A673 (cell line): ENCODE measurements at regions of chr17 and their contacts with region 1.

Region 1: GRCh38 chr17:34637548-34638525 is 58.5 kb downstream of the TMEM132E start:
- DNase-seq: peak; percentile 66
- H3K4me3 ChIP-seq: no peak overlapping the region
- H3K27ac ChIP-seq: no peak overlapping the region
- H3K4me1 ChIP-seq: no peaks in the 10 kb centered on the region
- H3K27me3 ChIP-seq: no peaks in the 10 kb centered on the region
- CTCF ChIP-seq: peak; percentile 72

Region 2: DNA sequence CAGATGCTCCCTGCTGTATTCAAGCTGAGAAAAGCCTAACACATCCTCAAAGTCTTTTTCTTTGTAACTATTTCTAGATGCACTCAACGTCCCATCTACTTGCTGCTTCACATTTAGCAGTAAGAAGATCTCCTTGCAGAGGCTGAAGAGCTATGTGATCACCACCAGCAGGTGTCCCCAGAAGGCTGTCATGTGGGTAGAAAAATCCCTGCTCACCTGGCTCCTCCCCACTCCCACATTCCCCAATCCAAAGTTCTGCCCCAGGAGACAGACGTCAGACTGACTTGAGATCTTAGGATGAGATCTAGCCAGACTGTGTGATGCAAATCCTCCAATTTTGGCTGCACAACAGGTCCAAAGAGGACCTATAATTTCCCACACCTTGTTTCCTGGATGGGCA is 280.4 kb before region 1 on chr17:
- CTCF ChIA-PET with region 1: no interaction called
- POLR2A ChIA-PET with region 1: no interaction called
- intact Hi-C with region 1: no loop called
- DNase-seq: no peak
- H3K4me3 ChIP-seq: no peak overlapping the region
- H3K27ac ChIP-seq: no peak overlapping the region
- H3K4me1 ChIP-seq: no peaks in the 10 kb centered on the region
- H3K27me3 ChIP-seq: no peaks in the 10 kb centered on the region
- CTCF ChIP-seq: no peak

Region 3: GRCh38 chr17:34420254-34420766 is 217.5 kb before region 1 on chr17:
- CTCF ChIA-PET with region 1: no interaction called
- POLR2A ChIA-PET with region 1: no interaction called
- intact Hi-C with region 1: loop called (anchors 2 kb)
- DNase-seq: peak; percentile 44
- H3K4me3 ChIP-seq: no peak overlapping the region
- H3K27ac ChIP-seq: no peak overlapping the region
- H3K4me1 ChIP-seq: no peaks in the 10 kb centered on the region
- H3K27me3 ChIP-seq: peaks cover 6% of the 10 kb centered on the region
- CTCF ChIP-seq: peak; percentile 70

Region 4: GRCh38 chr17:34542700-34543336 is 95.0 kb before region 1 on chr17:
- CTCF ChIA-PET with region 1: interaction called, 4 read pairs
- POLR2A ChIA-PET with region 1: no interaction called
- intact Hi-C with region 1: loop called (anchors 2 kb)
- DNase-seq: peak; percentile 2
- H3K4me3 ChIP-seq: no peak overlapping the region
- H3K27ac ChIP-seq: no peak overlapping the region
- H3K4me1 ChIP-seq: no peaks in the 10 kb centered on the region
- H3K27me3 ChIP-seq: peaks cover 13% of the 10 kb centered on the region
- CTCF ChIP-seq: peak; percentile 80

Region 5: DNA sequence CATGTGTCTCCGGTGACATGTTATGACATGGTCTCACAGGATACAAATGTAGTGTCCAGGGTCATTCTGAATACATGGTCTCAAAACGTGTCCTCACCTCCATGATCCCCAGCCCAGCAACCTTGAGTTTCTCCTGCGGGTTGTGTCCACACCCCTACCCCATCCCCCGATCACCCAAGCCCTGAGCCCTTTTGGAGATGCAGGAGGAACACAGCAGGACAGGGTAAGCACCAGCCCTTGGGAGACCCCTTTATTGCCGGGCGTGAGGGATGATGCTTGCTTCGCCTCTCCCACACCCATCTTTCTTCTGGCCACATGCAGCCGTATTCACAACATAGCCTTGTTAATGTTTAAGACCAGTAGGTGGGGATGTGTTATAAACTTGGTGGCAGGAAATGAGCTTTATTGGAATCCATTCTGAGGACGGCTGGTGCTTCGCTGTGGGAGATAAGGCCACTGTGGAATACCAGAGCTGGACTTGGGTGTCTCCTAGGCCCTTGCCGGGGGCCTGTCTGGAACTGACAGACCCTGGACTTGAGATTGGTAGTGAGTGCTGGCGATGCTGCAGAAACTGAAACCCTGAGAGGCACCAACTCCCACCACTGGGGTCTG is 52.9 kb before region 1 on chr17:
- CTCF ChIA-PET with region 1: interaction called, 6 read pairs
- POLR2A ChIA-PET with region 1: no interaction called
- intact Hi-C with region 1: loop called (anchors 2 kb)
- DNase-seq: peak; percentile 29
- H3K4me3 ChIP-seq: no peak overlapping the region
- H3K27ac ChIP-seq: no peak overlapping the region
- H3K4me1 ChIP-seq: peaks cover under 1% of the 10 kb centered on the region
- H3K27me3 ChIP-seq: peaks cover 47% of the 10 kb centered on the region
- CTCF ChIP-seq: peak; percentile 28; the same call in 1 of the 2 replicates

Region 6: GRCh38 chr17:34840750-34841149 is 202.9 kb after region 1 on chr17:
- CTCF ChIA-PET with region 1: no interaction called
- POLR2A ChIA-PET with region 1: no interaction called
- intact Hi-C with region 1: no loop called
- DNase-seq: peak; percentile 44
- H3K4me3 ChIP-seq: no peak overlapping the region
- H3K27ac ChIP-seq: no peak overlapping the region
- H3K4me1 ChIP-seq: no peaks in the 10 kb centered on the region
- H3K27me3 ChIP-seq: no peaks in the 10 kb centered on the region
- CTCF ChIP-seq: no peak